Heart left ventricle (tissue), 16 donors: ENCODE measurements at regions of chr19 and their contacts with region 1.

Region 1: GRCh38 chr19:39412100-39412866 is at the start of gene PLEKHG2:
- DNase-seq: peak; percentile 97 to 98 (median 97)
- ATAC-seq: peak; percentile 65 to 72 (median 71)
- H3K4me3 ChIP-seq: peak within 1 kb of the TSS; percentile 61 to 100 (median 85)
- H3K27ac ChIP-seq: peak within 1 kb of the TSS; percentile 94 to 100 (median 99)
- H3K4me1 ChIP-seq: peaks cover 7 to 65% (median 37%) of the 10 kb centered on the region in 12 donors
- H3K27me3 ChIP-seq: peaks cover 0 to 5% (median 0%) of the 10 kb centered on the region in 9 donors
- CTCF ChIP-seq: peak; percentile 75 to 98 (median 89)
- POLR2A ChIP-seq: peak in 1 of 2 donors; percentile 80
- total RNA-seq, gene PLEKHG2: 9.2 to 38.5 (median 14.6) TPM

Region 2: GRCh38 chr19:39341719-39342604 is 70.3 kb before region 1 on chr19 and contains the start of gene SAMD4B:
- intact Hi-C with region 1: loop called in 4 of 10 experiments (anchors 1 to 5 kb)
- DNase-seq: peak; percentile 99 to 100 (median 99)
- ATAC-seq: peak; percentile 96 to 97 (median 97)
- H3K4me3 ChIP-seq: peak within 1 kb of the TSS; percentile 71 to 96 (median 86)
- H3K27ac ChIP-seq: peak within 1 kb of the TSS in 11 of 12 donors; percentile 80 to 93 (median 90)
- H3K4me1 ChIP-seq: peaks cover 0 to 58% (median 31%) of the 10 kb centered on the region in 12 donors
- H3K27me3 ChIP-seq: no peaks in the 10 kb centered on the region
- CTCF ChIP-seq: peak; percentile 75 to 97 (median 88)
- POLR2A ChIP-seq: peak; percentile 25 to 90
- total RNA-seq, gene SAMD4B: 34.9 to 101 (median 52.3) TPM

Region 3: DNA sequence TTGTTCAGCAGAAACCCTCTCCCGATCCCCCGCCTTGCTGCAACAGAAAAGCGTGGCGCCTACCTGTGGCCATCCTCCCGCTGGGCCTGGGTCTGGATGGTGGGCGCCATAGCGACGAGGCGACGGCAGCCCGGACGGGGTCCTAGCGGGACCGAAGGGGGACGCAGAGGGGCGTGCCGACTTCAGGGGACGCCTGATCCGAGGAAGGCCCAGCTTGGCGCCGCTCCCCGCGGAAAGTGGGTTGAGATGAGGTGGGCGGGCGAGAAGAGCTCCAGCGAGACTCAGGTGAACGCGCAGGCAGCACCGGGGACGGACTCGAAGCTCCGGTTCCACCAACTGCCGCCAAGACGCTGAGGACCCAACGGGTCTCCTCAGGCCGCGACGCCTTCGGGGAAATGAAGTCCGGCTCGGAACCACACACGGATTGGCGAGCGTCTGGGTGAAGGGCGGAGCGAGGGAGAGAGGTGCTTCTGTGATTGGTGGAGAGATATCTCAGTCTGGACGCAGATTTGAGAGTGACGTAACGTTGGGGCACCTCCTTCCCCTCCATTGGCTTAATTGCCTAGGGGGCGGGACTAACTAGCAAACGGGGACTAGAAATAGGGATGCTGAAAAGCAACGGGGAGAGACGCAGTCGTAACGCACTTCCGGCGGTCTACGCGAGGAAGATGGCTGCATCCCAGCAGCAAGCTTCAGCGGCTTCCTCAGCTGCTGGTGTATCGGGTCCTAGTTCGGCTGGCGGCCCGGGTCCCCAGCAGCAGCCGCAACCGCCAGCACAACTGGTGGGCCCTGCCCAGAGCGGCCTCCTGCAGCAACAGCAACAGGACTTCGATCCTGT is 21.3 kb before region 1 on chr19 and contains the starts of genes MED29 and PAF1:
- intact Hi-C with region 1: loop called in 3 of 10 experiments (anchors 1 to 2 kb)
- DNase-seq: peak; percentile 97 to 99 (median 98)
- ATAC-seq: peak; percentile 95 to 99 (median 96)
- H3K4me3 ChIP-seq: peak within 1 kb of the TSS; percentile 74 to 99 (median 94)
- H3K27ac ChIP-seq: peak within 1 kb of the TSS; percentile 94 to 100 (median 98)
- H3K4me1 ChIP-seq: peaks cover 3 to 25% (median 19%) of the 10 kb centered on the region in 12 donors
- H3K27me3 ChIP-seq: no peaks in the 10 kb centered on the region
- CTCF ChIP-seq: peak in 1 of 12 donors; percentile 26
- POLR2A ChIP-seq: peak; percentile 49 to 89
- total RNA-seq, gene MED29: 26.3 to 53.0 (median 34.1) TPM
- total RNA-seq, gene PAF1: 32.8 to 75.7 (median 40.7) TPM

Region 4: GRCh38 chr19:39397360-39398296 is 14.7 kb before region 1 on chr19:
- intact Hi-C with region 1: loop called in 7 of 10 experiments (anchors 1 to 2 kb)
- DNase-seq: peak; percentile 89 to 96 (median 90)
- ATAC-seq: peak; percentile 70 to 85 (median 80)
- H3K4me3 ChIP-seq: peak overlapping the region in 3 of 12 donors; percentile 2 to 44 (median 20)
- H3K27ac ChIP-seq: peak overlapping the region; percentile 11 to 100 (median 79)
- H3K4me1 ChIP-seq: peaks cover 6 to 56% (median 25%) of the 10 kb centered on the region in 12 donors
- H3K27me3 ChIP-seq: no peaks in the 10 kb centered on the region
- CTCF ChIP-seq: peak; percentile 95 to 100 (median 98)
- POLR2A ChIP-seq: peak in 1 of 2 donors; percentile 17

Region 5: DNA sequence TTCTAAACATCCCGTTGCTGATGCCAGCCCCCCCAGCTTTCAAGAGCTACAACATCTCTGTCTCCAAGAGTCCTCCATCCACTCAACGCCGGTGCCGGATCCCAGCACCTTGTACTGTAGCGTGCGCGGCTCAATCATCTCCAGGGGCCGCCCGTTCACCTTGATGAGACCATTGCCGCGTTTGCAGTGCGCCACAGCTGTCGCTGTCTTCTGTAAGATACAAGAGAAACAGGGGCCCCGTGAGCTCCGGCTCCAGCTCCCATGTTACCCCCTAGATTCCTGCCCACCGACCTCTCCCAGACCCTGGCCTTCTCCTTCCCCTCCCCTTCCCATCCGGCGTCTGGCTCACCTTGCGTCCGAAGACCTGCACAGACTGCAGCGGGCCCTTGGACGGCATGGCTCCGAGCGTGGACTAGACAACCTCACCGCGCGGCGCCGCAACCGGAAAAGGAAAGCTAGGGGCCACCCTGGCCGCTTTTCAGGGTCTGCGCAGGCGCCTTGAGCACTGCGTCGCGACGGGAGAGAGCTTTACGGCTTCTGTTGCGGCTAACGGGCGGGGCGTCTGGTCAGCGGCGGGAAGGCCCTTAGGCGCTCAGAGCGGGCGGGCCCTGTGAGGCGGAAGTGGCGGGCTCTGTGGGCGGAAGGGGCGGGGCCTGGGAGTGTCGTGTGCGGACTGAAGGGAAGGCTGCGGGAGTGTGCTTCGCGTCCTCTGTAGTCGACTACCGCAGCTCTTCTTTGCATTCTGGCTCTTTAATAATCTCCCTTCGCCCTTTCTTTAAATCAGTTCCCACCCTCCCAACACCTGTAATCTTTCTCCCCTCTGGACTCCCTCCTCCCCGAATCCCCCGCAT is 23.4 kb after region 1 on chr19 and contains the start of gene RPS16:
- intact Hi-C with region 1: loop called in 3 of 10 experiments (anchors 1 to 2 kb)
- DNase-seq: peak; percentile 99
- ATAC-seq: peak; percentile 97 to 99 (median 99)
- H3K4me3 ChIP-seq: peak within 1 kb of the TSS; percentile 60 to 99 (median 90)
- H3K27ac ChIP-seq: peak within 1 kb of the TSS; percentile 73 to 93 (median 86)
- H3K4me1 ChIP-seq: peaks cover 11 to 40% (median 23%) of the 10 kb centered on the region in 12 donors
- H3K27me3 ChIP-seq: peaks cover 0 to 5% (median 0%) of the 10 kb centered on the region in 9 donors
- CTCF ChIP-seq: peak in 1 of 12 donors; percentile 18
- POLR2A ChIP-seq: peak; percentile 70 to 96
- total RNA-seq, gene RPS16: 617 to 1,566 (median 1,374) TPM

Region 6: GRCh38 chr19:39445265-39446111 is 33.2 kb after region 1 on chr19 and contains the start of gene SUPT5H:
- intact Hi-C with region 1: loop called in 1 of 10 experiments (anchors 2 kb)
- DNase-seq: peak; percentile 97 to 98 (median 97)
- ATAC-seq: peak; percentile 98 to 99 (median 98)
- H3K4me3 ChIP-seq: peak within 1 kb of the TSS; percentile 65 to 98 (median 86)
- H3K27ac ChIP-seq: peak within 1 kb of the TSS; percentile 86 to 96 (median 92)
- H3K4me1 ChIP-seq: peaks cover 8 to 51% (median 36%) of the 10 kb centered on the region in 12 donors
- H3K27me3 ChIP-seq: no peaks in the 10 kb centered on the region
- CTCF ChIP-seq: peak in 1 of 12 donors; percentile 12
- POLR2A ChIP-seq: peak; percentile 34 to 91
- total RNA-seq, gene SUPT5H: 64.2 to 113 (median 81.7) TPM

Region 7: DNA sequence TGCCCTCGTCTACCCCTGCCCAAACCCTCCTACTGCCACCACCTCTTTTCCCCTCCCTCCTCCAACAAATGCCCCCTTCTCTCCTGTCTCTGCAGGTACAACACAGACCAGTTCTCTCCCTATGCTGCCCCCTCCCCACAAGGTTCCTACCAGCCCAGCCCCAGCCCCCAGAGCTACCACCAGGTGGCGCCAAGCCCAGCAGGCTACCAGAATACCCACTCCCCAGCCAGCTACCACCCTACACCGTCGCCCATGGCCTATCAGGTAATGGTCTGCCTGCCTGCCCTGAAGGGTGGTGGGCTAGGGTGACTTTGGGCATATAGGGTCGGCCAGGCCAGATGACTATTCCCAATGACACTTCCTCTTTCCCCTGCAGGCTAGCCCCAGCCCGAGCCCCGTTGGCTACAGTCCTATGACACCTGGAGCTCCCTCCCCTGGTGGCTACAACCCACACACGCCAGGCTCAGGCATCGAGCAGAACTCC is 61.9 kb after region 1 on chr19:
- intact Hi-C with region 1: no loop called
- DNase-seq: peak; percentile 44 to 77 (median 49)
- ATAC-seq: peak; percentile 34 to 71 (median 56)
- H3K4me3 ChIP-seq: no peak overlapping the region
- H3K27ac ChIP-seq: no peak overlapping the region
- H3K4me1 ChIP-seq: peaks cover 0 to 7% (median 0%) of the 10 kb centered on the region in 12 donors
- H3K27me3 ChIP-seq: no peaks in the 10 kb centered on the region
- CTCF ChIP-seq: peak; percentile 55 to 81 (median 75)
- POLR2A ChIP-seq: no peak